Lower lobe of right lung (tissue), 2 donors: ENCODE measurements at regions of chrX and their contacts with region 1.

Region 1: GRCh38 chrX:15143050-15143824 is 126.6 kb downstream of the ASB9 start:
- DNase-seq: peak; percentile 43
- ATAC-seq: peak in 1 of 2 donors; percentile 84
- H3K4me3 ChIP-seq: no peak overlapping the region
- H3K27ac ChIP-seq: no peak overlapping the region
- H3K4me1 ChIP-seq: no peaks in the 10 kb centered on the region
- H3K27me3 ChIP-seq: no peaks in the 10 kb centered on the region
- CTCF ChIP-seq: peak; percentile 62

Region 2: DNA sequence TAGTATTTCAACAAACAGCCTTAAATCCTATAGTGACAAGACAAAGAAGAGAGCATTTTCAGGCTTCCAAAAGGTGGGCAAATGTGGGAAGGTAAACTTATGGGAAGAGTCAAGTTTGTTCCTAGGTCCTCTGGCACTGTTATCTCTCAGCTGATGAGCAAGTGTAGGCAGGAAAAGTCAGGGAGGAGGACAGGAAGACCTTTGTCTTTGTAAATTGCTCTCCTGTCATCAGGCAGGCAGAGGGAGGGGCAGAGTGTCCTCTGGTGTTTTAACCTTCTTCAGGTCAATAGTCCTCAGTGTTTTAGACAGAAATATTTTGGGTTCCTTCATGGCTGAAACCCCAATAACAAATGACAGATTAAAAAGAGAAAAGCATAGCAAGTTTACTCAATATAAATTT is 1100.0 kb before region 1 on chrX:
- intact Hi-C with region 1: loop called (anchors 10 kb)
- DNase-seq: no peak
- ATAC-seq: no peak
- H3K4me3 ChIP-seq: no peak overlapping the region
- H3K27ac ChIP-seq: no peak overlapping the region
- H3K4me1 ChIP-seq: no peaks in the 10 kb centered on the region
- H3K27me3 ChIP-seq: no peaks in the 10 kb centered on the region
- CTCF ChIP-seq: no peak

Region 3: DNA sequence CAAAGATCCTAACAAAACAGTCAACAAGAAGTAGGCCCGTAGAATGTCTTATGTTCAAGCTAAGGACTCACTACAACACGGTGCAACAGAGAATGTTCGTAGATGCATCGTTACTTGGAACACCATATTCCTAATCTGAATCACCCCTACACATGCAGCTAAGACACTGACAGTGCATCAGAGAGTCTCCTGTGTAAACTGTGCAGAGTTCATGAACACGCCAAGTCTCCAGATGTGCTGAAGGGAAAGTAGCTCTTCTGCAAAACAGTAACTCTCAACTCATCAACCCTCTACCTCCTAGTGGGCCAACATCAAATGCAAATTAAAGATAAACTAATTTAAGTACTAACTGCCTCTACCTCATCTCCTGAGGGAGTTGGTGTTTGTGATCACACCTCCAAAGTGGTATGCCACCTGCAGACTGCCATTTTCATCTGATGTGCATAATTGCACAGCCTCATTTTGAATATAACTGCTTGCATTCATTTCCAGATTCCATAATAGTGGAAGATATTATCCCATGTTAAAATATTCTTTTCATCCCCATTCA is 196.6 kb before region 1 on chrX:
- intact Hi-C with region 1: no loop called
- DNase-seq: no peak
- ATAC-seq: no peak
- H3K4me3 ChIP-seq: no peak overlapping the region
- H3K27ac ChIP-seq: no peak overlapping the region
- H3K4me1 ChIP-seq: no peaks in the 10 kb centered on the region
- H3K27me3 ChIP-seq: no peaks in the 10 kb centered on the region
- CTCF ChIP-seq: no peak

Region 4: GRCh38 chrX:15349046-15349445 is 205.8 kb after region 1 on chrX:
- intact Hi-C with region 1: no loop called
- DNase-seq: no peak
- ATAC-seq: peak; percentile 81 to 88
- H3K4me3 ChIP-seq: no peak overlapping the region
- H3K27ac ChIP-seq: no peak overlapping the region
- H3K4me1 ChIP-seq: no peaks in the 10 kb centered on the region
- H3K27me3 ChIP-seq: no peaks in the 10 kb centered on the region
- CTCF ChIP-seq: peak; percentile 45